ENCODE measurements at regions of chr12 and their contacts with region 1.

Region 1: DNA sequence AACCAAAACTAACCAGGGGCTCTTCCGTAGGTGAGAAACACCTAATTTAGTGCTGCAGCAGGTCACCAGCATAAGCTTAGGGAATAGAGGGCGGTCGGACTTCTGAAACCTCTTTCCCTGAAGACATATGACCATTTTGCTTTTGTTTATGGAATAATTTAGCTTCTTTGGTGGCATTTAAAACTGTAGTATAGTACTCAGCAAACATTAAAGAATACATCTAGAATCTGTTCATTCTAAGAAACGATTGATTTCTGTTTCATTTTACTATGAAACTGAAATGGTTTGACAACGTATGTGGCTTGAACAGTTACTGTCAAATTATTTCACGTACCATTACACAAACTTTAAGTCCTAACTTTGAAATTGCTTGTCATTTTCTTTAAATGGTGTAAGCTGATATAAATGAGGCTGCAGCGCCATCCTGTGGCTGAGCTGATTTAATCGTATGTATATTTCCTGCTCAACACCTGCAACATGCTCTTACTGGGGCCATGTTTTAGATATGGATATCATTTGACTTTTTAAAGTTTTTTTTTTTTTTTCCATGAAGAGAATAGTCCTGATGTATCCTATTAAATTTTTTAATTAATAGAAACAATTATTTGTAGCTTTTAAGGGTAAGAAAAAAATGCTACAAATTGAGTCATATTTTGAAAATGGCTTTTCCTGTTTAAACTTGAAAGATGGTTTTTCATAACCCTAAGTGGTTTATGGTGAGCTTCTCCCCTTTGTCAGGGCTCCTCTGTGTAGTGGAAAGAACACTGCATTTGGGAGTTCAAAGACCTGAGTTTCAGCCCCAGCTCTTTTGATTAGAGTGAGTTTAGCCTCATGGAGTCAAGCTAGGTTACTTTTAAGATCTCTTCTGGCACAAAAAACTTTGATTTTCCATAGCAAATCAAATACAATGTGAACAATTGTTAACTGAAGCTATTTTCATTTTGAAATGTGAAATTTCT is 27.4 kb downstream of the CFAP54 start:
- DNase-seq: peak; percentile 66
- CTCF ChIP-seq: peak; percentile 73

Region 2: GRCh38 chr12:95998611-95999286 is 518.0 kb before region 1 on chr12:
- CTCF ChIA-PET with region 1: interaction called, 10 read pairs
- POLR2A ChIA-PET with region 1: no interaction called
- DNase-seq: peak; percentile 72
- CTCF ChIP-seq: peak; percentile 70

Region 3: DNA sequence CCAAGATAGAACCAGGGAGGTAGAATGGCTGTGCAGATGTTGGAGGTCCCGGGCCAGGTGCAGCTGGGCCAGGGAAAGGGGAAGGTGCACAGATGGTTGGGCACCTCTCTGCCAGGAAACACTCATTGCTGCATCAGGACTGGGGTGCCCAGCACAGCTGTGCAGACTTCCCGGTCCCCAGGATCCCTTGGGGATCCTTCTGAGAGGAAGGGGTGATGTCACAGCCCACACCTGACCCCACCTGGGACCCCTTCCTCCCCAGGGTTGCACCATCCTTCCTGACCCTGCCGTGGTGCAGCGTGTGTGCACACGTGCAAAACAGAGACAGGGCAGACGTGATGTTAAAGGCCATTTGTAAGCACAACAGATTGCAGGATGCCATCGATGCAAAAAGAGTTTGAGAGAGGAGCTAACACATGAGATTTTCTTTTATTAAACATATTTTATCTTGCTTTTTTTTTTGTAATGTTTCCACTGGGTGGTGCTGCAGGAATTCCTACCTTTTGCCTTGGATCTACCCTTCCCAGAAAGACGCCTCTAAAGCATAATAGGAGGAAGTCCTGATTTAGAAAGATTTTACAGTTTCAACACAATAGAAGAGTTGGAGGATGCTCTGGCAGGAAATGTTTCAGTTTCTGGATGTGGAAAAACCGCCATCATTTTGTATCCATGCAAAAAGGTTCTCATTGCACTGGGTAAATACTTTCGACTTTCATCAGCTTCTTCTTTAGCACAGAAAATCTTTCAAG is 307.8 kb before region 1 on chr12:
- CTCF ChIA-PET with region 1: interaction called, 19 read pairs
- POLR2A ChIA-PET with region 1: no interaction called
- DNase-seq: no peak
- CTCF ChIP-seq: no peak

Region 4: DNA sequence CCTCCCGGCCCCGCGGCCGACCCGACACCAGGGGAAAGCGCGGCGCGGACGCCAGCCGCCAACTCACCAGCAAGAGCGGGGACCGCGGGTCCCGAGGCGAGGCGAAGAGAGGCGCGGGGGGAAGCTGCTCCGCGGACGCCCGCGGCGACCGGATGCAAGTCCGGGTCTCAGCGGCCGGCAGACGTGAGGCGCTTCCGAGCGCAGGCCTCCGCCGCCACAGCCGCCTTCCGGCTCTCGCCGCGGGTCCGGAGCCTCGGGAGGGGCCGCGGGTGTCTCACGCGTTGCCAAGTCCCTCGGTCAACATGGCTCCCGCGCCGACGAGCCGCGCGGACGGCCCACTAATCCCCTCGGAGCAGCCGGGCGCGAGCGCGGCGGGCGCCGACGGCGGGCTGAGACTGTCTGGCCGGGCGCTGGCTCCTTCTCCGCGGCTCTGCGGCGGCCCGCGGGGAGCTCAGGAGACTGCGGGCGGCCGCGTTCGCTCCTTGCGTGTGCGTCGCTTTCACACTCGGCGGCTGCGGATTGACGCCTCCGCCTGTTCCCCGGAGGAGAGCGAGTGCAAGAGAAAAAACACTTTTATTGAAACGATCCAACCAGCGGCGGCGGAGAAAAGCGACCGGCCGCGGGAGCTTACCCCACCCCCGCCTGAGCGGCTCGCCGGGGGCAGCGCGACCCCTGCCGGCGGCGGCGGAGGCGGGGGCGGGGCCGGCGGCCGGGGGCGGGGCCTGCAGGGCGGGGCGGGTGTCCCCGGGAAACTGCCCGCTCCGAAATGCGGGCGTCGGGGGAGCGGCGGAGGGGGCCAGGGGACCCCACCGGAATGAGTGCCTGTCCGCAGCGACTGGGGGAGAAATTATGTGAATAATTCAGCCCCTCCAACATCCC is 116.6 kb before region 1 on chr12 and contains the start of gene CDK17:
- CTCF ChIA-PET with region 1: interaction called, 32 read pairs
- POLR2A ChIA-PET with region 1: no interaction called
- DNase-seq: peak; percentile 87
- CTCF ChIP-seq: peak; percentile 34

Region 5: DNA sequence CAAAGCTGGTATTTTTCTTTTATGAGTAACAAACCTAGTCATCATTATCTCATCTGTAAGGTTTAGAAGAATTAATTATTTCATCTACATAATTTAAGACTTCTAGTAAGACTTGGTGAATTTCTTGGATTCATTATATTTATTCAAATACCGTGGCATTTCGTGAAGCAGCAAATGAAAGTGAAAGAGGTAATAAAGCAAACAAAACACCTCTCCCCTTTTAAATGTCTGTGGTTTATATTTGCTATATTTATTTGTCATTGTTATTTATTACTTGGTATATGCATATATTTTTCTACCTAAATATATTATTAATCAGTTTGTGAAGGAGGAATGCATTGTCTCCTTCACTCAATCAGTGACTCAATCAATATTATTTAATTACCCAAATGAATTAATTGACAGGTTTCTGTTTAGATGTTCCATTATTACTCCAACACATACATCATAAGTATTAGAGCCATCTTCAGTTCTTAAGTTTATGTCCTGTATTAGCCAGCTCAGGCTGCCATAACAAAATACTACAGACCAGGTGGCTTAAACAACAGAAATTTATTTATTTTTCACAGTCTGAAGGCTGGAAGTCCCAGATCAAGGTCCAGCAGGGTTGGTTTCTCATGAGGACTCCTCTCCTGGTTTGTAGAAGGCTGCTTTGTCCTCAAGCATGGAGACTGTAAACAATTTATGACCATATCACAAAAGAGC is 20.8 kb before region 1 on chr12:
- CTCF ChIA-PET with region 1: interaction called, 90 read pairs
- POLR2A ChIA-PET with region 1: no interaction called
- DNase-seq: peak; percentile 30
- CTCF ChIP-seq: no peak

Region 6: GRCh38 chr12:96534339-96534738 is 17.6 kb after region 1 on chr12:
- CTCF ChIA-PET with region 1: interaction called, 27 read pairs
- POLR2A ChIA-PET with region 1: no interaction called
- DNase-seq: no peak
- CTCF ChIP-seq: no peak

Region 7: DNA sequence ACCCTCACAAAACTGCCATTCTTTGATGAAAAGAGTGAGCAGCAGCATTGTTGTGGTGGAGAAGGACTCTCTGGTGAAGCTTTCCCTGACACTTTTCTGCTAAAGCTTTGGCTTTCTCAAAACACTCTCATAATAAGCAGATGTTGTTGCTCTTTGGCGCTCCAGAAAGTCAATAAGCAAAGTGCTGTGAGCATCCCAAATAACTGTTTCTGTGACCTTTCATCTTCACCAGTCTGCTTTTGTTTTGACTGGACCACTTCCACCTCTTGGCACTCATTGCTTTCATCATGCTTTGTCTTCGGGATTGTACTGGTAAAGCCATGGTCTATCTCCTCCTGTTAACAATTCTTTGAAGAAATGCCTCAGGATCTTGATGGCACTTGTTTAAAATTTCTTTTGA is 1574.0 kb after region 1 on chr12:
- CTCF ChIA-PET with region 1: no interaction called
- POLR2A ChIA-PET with region 1: no interaction called
- DNase-seq: no peak
- CTCF ChIP-seq: no peak